Esophagus squamous epithelium (tissue), 5 donors: ENCODE measurements at regions of chr2 and their contacts with region 1.

Region 1: GRCh38 chr2:197705121-197705911 is at the start of gene MARS2:
- DNase-seq: peak; percentile 58
- H3K4me3 ChIP-seq: peak within 1 kb of the TSS; percentile 75 to 96 (median 88)
- H3K27ac ChIP-seq: peak within 1 kb of the TSS; percentile 76 to 89 (median 87)
- H3K4me1 ChIP-seq: peaks cover 21 to 53% (median 25%) of the 10 kb centered on the region in 3 donors
- H3K27me3 ChIP-seq: no peaks in the 10 kb centered on the region
- CTCF ChIP-seq: peak in 1 of 6 experiments; percentile 24
- POLR2A ChIP-seq: peak in 2 of 4 donors; percentile 19 to 59
- total RNA-seq, gene MARS2: 9.9 to 14.5 (median 12.3) TPM

Region 2: GRCh38 chr2:197515739-197516392 is 189.4 kb before region 1 on chr2 and contains the start of gene MOB4:
- intact Hi-C with region 1: loop called (anchors 10 kb)
- DNase-seq: peak; percentile 71
- H3K4me3 ChIP-seq: peak within 1 kb of the TSS; percentile 85 to 96 (median 88)
- H3K27ac ChIP-seq: peak within 1 kb of the TSS; percentile 94 to 96 (median 95)
- H3K4me1 ChIP-seq: peaks cover 12 to 53% (median 24%) of the 10 kb centered on the region in 3 donors
- H3K27me3 ChIP-seq: no peaks in the 10 kb centered on the region
- CTCF ChIP-seq: peak in 2 of 6 experiments; percentile 14 to 32
- POLR2A ChIP-seq: peak in 3 of 4 donors; percentile 74 to 94 (median 90)
- total RNA-seq, gene MOB4: 30.7 to 47.1 (median 38.5) TPM

Region 3: GRCh38 chr2:197828464-197829135 is 123.3 kb after region 1 on chr2:
- intact Hi-C with region 1: no loop called
- DNase-seq: no peak
- H3K4me3 ChIP-seq: no peak overlapping the region
- H3K27ac ChIP-seq: no peak overlapping the region
- H3K4me1 ChIP-seq: peaks cover 0 to 8% (median 3%) of the 10 kb centered on the region in 3 donors
- H3K27me3 ChIP-seq: no peaks in the 10 kb centered on the region
- CTCF ChIP-seq: no peak
- POLR2A ChIP-seq: no peak

Region 4: DNA sequence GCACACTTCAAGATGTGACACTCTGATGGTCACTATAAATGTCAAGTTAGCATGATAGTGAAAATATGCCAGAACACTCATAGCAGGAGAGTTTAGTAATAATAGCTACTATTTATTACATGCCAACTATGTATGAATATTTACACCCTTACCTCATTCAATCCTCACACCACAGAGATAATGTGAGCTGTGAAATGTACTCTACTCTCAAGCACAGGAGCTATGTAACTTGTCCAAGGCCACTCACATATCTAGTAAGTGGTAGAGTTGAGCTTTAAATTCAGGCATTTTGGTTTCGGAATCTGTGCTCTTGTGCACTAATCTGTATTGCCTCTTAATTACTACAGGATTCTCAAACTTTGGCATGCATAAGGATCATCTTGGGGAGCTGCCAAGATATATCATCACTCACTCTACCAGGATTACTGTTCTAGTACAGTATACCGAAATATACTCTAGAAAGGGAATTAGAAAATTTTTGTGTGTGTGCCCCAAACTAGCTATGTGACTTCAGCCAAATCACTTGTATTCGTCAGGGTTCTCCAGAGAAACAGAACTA is 253.4 kb after region 1 on chr2:
- intact Hi-C with region 1: no loop called
- DNase-seq: no peak
- H3K4me3 ChIP-seq: no peak overlapping the region
- H3K27ac ChIP-seq: no peak overlapping the region
- H3K4me1 ChIP-seq: no peaks in the 10 kb centered on the region
- H3K27me3 ChIP-seq: no peaks in the 10 kb centered on the region
- CTCF ChIP-seq: no peak
- POLR2A ChIP-seq: no peak